Heart left ventricle (tissue), 16 donors: ENCODE measurements at regions of chr7 and their contacts with region 1.

Region 1: GRCh38 chr7:50206453-50207250 is 97.9 kb upstream of the IKZF1 start:
- DNase-seq: no peak
- ATAC-seq: peak in 3 of 4 donors; percentile 24 to 63 (median 39)
- H3K4me3 ChIP-seq: no peak overlapping the region
- H3K27ac ChIP-seq: peak overlapping the region in 1 of 12 donors; percentile 52
- H3K4me1 ChIP-seq: peaks cover 0 to 48% (median 0%) of the 10 kb centered on the region in 12 donors
- H3K27me3 ChIP-seq: peaks cover 0 to 8% (median 0%) of the 10 kb centered on the region in 9 donors
- CTCF ChIP-seq: no peak
- POLR2A ChIP-seq: no peak

Region 2: GRCh38 chr7:50304158-50304910 is 97.7 kb after region 1 on chr7 and contains the start of gene IKZF1:
- intact Hi-C with region 1: loop called in 1 of 10 experiments (anchors 10 kb)
- DNase-seq: peak; percentile 60 to 88 (median 70)
- ATAC-seq: peak in 3 of 4 donors; percentile 66 to 82 (median 69)
- H3K4me3 ChIP-seq: peak within 1 kb of the TSS; percentile 13 to 76 (median 44)
- H3K27ac ChIP-seq: peak within 1 kb of the TSS in 4 of 12 donors; percentile 17 to 96 (median 51)
- H3K4me1 ChIP-seq: peaks cover 0 to 26% (median 0%) of the 10 kb centered on the region in 12 donors
- H3K27me3 ChIP-seq: peaks cover 13 to 63% (median 25%) of the 10 kb centered on the region in 9 donors
- CTCF ChIP-seq: no peak
- POLR2A ChIP-seq: no peak
- total RNA-seq, gene IKZF1: 0.90 to 27.8 (median 3.2) TPM

Region 3: GRCh38 chr7:51154201-51154600 is 947.5 kb after region 1 on chr7:
- intact Hi-C with region 1: loop called in 1 of 10 experiments (anchors 10 kb)
- DNase-seq: no peak
- ATAC-seq: no peak
- H3K4me3 ChIP-seq: no peak overlapping the region
- H3K27ac ChIP-seq: no peak overlapping the region
- H3K4me1 ChIP-seq: peaks cover 0 to 9% (median 0%) of the 10 kb centered on the region in 12 donors
- H3K27me3 ChIP-seq: no peaks in the 10 kb centered on the region
- CTCF ChIP-seq: no peak
- POLR2A ChIP-seq: no peak